ENCODE measurements at regions of chr5 and their contacts with region 1.

Region 1: GRCh38 chr5:119411935-119412602 is 40.2 kb upstream of the HSD17B4 start:
- DNase-seq: peak; percentile 63
- H3K4me3 Mint-ChIP-seq: peak overlapping the region; percentile 74
- H3K27ac Mint-ChIP-seq: peak overlapping the region; percentile 81
- H3K4me1 Mint-ChIP-seq: peaks cover 30% of the 10 kb centered on the region
- H3K27me3 Mint-ChIP-seq: no peaks in the 10 kb centered on the region
- CTCF ChIP-seq: peak; percentile 84

Region 2: DNA sequence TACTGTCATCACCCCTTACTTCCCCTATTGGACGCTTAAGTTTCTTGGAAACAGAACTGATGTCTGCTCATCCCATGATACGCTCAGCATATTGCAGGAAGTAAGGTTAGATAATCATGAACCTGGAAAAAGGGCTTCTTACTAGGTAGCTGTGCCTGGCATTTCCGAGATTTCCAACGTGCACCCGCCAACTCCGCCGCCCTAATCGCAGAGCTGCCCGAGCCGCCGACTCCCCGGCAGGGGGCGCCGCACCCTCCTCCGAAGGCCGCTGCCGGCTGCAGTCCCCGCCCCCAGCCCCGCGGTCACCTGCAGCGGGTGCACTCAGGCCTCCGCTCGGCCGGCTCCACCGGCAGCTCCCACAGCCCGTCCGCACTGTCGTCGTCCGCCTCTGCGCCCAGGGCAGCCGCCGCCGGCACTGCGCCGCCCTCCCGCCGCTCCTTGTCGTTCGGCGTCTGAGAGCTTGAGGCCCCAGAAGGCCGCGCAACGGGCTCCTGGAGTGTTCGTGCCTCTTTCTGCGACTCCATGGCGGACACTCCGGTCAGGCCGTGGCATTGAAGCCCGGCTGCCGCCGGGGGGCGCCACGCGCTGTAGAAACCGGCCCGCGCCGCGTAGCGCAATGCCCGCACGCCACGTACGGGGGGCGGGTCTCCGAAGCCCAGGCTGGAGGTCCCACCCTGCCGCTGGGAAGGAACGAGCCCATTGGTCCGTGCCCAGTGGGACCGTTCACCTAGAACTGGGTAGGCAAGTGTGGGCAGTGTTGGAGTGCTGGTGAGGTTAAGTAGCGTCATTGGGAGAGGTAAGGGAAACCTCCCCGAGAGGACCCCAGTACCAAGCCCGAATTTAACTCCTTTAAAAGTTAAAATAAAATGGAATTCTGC is 423.8 kb before region 1 on chr5 and contains the start of gene DTWD2:
- CTCF ChIA-PET with region 1: interaction called, 22 read pairs
- intact Hi-C with region 1: loop called (anchors 1 kb)
- DNase-seq: peak; percentile 99
- H3K4me3 Mint-ChIP-seq: peak within 1 kb of the TSS; percentile 82
- H3K27ac Mint-ChIP-seq: peak within 1 kb of the TSS; percentile 91
- H3K4me1 Mint-ChIP-seq: peaks cover 54% of the 10 kb centered on the region
- H3K27me3 Mint-ChIP-seq: no peaks in the 10 kb centered on the region
- CTCF ChIP-seq: peak; percentile 98
- total RNA-seq, gene DTWD2: 12.3 and 12.6 TPM in 2 replicates

Region 3: DNA sequence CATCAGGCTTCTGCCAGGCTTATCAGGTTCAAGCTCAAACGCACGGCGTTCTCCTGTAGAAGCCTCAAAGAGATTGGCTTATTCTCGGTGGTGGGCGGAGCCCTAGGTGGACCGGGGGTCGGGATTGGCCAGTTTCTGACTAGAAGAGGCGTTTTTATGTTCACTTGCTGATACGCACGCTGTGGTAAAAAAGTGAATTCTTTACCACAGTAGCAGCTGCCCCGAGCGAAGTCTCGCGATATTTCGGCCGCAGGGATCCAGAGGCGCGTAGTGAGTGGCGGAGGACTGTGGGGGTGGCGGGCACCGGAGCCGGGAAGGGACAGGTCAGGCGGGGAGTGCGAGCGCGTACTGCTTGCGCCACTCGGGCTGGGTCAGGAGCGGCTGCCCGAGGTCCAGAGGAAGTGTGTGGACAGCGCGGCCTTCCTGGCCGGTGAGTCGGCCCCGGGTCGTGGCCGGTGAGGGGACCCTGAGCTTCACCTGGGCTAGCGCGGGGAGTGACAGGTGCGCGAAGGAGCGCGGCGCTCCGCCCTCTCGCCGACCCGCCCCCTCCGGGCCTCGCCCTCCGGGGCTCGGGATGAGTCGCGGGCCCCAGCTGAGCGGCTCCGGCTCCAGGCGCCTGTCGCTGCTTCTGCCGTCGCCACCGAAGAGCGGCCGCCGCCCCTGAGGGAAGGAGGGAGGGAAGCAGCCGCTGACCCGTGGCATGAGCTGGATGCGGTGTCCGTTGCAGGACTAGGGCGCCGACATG is 341.1 kb before region 1 on chr5 and contains the start of gene DMXL1:
- CTCF ChIA-PET with region 1: interaction called, 4 read pairs
- intact Hi-C with region 1: loop called (anchors 5 kb)
- DNase-seq: peak; percentile 99
- H3K4me3 Mint-ChIP-seq: peak within 1 kb of the TSS; percentile 100
- H3K27ac Mint-ChIP-seq: peak within 1 kb of the TSS; percentile 95
- H3K4me1 Mint-ChIP-seq: peaks cover 25% of the 10 kb centered on the region
- H3K27me3 Mint-ChIP-seq: no peaks in the 10 kb centered on the region
- CTCF ChIP-seq: no peak
- total RNA-seq, gene DMXL1: 43.3 and 46.6 TPM in 2 replicates

Region 4: DNA sequence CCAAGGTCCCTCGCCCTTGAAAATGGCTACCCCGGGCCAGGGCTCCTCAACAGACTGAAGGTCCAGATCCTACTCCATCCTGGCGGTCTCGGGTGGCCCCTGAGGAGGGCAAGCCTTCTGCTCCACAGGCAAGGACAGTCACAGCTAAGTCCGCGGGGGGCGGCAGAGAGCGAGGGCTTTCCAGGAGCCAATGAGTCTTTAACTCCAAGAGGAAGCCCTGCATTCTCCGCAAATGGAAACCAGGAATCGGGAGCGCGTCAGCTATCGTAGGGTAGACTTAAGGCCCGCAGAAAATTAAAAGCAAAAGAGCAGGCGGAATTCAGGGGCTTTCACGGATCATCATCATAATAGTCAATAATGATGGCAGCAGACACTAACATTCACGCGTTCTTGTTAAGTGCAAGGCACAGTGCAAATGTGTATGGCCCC is 144.1 kb before region 1 on chr5:
- CTCF ChIA-PET with region 1: no interaction called
- intact Hi-C with region 1: loop called (anchors 1 kb)
- DNase-seq: peak; percentile 93
- H3K4me3 Mint-ChIP-seq: peak overlapping the region; percentile 83
- H3K27ac Mint-ChIP-seq: peak overlapping the region; percentile 65
- H3K4me1 Mint-ChIP-seq: peaks cover 39% of the 10 kb centered on the region
- H3K27me3 Mint-ChIP-seq: no peaks in the 10 kb centered on the region
- CTCF ChIP-seq: peak; percentile 56

Region 5: DNA sequence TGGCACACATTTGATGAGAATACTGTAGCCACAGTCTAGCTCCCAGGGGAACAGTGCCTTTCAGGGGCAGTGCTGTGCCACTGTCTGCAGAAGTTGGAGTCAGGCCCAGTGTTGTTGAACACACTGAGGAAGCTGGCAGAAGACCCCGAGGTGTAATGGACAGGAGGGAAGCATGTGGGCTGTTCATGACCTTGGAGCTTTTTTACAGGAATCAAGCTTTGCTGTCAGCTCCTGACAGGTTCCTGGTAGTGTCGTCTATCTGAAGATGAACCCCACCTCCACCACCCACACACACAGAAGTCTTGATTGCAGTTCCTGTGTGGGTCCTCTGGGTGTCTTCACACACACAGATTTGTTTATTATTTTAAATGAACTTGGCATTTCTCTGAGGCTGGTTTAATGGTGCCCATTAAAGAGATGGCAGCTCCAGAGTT is 96.5 kb before region 1 on chr5:
- CTCF ChIA-PET with region 1: interaction called, 4 read pairs
- intact Hi-C with region 1: loop called (anchors 1 kb)
- DNase-seq: peak; percentile 35
- H3K4me3 Mint-ChIP-seq: no peak overlapping the region
- H3K27ac Mint-ChIP-seq: no peak overlapping the region
- H3K4me1 Mint-ChIP-seq: no peaks in the 10 kb centered on the region
- H3K27me3 Mint-ChIP-seq: no peaks in the 10 kb centered on the region
- CTCF ChIP-seq: peak; percentile 25

Region 6: GRCh38 chr5:119470851-119471451 is 58.9 kb after region 1 on chr5:
- CTCF ChIA-PET with region 1: no interaction called
- intact Hi-C with region 1: no loop called
- DNase-seq: peak; percentile 41
- H3K4me3 Mint-ChIP-seq: no peak overlapping the region
- H3K27ac Mint-ChIP-seq: no peak overlapping the region
- H3K4me1 Mint-ChIP-seq: no peaks in the 10 kb centered on the region
- H3K27me3 Mint-ChIP-seq: no peaks in the 10 kb centered on the region
- CTCF ChIP-seq: peak; percentile 77

Measured in Calu3 (cell line).